Common myeloid progenitor, CD34-positive (primary cell): ENCODE measurements at regions of chr6 and their contacts with region 1.

Region 1: DNA sequence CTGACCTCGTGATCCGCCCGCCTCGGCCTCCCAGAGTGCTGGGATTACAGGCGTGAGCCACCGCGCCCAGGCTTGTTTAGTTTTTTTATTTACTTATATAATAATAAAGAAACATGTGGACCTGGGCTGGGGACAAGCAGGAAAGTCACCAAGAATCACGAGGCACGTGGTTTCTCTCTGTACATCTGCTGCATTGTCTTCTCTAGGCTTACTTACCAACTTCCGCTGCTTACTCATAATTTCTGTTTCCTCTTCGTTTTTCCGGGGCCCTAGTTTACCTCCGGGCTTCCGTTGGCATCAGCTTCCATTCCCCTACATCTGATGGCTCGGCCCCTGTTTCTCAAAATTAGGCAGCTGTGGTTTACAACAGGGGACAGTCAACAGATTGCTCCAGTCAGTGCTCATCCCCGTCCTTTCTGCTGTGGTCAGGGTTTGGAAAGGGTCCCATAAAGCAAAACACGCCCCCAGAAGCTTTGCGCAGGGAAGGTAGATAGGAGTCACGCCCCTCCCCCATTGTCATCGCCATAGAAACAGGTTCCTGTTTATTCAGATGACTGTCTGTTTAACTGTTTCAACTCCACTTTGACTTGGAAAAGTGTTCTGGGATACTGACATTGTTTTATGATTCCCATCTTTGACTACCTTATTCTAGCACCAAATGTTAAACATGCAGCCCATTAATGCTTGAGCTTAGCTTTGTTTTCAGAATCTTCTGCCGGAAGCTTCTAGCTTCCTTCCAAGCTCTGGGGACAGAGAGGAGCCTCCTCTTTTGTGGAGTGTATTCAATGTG is 31.9 kb upstream of the TXLNB start:
- DNase-seq: peak; percentile 92 to 97 (median 96)
- H3K4me3 ChIP-seq: peak overlapping the region in 6 of 7 experiments; percentile 19 to 60 (median 34)
- H3K27ac ChIP-seq: peak overlapping the region; percentile 93 to 97
- H3K4me1 ChIP-seq: peaks cover 24 to 55% (median 37%) of the 10 kb centered on the region in 4 experiments
- H3K27me3 ChIP-seq: no peaks in the 10 kb centered on the region

Region 2: DNA sequence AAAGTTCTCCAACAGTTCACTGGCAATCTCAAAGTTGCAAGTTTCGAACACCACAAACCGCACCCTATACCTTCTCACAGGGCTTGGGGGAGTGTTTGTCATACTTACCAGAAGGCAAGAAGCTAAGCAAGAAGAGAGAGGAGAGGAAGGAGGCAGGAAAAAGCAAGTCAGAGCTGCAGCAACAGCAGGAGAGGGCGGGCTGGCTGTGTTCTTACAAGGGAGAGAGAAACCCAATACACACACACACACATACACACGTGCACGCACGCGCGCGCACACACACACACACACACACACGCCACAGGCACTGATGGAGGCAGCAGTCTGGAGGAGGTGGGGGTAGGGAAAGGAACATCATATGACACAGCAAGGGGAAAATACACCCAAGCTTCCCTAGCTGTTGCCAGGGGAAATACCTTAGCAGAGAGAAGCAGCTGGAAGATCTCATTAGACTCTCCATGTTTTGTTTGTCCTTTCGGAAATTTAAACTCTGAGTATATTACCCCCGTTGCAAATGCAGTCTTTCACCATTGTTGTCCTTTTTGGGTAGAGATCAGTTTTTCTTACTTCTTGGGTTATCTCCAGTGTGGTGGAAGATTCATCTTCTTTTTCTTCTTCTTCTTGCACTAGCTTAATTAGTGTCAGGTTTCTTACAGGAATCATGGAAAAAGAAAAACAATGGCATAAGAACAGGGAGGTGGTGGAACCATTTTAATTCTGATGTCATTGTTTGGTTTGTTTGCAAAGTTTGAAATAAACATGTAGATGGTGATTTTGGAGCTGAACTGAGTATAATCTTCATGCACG is 31.7 kb before region 1 on chr6 and contains the start of gene TXLNB:
- CTCF ChIA-PET with region 1: interaction called, 19 read pairs
- POLR2A ChIA-PET with region 1: interaction called, 6 read pairs
- DNase-seq: peak; percentile 75 to 98 (median 95)
- H3K4me3 ChIP-seq: peak within 1 kb of the TSS in 6 of 7 experiments; percentile 27 to 60 (median 46)
- H3K27ac ChIP-seq: peak within 1 kb of the TSS; percentile 81 to 89
- H3K4me1 ChIP-seq: peaks cover 27 to 66% (median 48%) of the 10 kb centered on the region in 4 experiments
- H3K27me3 ChIP-seq: no peaks in the 10 kb centered on the region